ENCODE measurements at regions of chr3 and their contacts with region 1.

Region 1: DNA sequence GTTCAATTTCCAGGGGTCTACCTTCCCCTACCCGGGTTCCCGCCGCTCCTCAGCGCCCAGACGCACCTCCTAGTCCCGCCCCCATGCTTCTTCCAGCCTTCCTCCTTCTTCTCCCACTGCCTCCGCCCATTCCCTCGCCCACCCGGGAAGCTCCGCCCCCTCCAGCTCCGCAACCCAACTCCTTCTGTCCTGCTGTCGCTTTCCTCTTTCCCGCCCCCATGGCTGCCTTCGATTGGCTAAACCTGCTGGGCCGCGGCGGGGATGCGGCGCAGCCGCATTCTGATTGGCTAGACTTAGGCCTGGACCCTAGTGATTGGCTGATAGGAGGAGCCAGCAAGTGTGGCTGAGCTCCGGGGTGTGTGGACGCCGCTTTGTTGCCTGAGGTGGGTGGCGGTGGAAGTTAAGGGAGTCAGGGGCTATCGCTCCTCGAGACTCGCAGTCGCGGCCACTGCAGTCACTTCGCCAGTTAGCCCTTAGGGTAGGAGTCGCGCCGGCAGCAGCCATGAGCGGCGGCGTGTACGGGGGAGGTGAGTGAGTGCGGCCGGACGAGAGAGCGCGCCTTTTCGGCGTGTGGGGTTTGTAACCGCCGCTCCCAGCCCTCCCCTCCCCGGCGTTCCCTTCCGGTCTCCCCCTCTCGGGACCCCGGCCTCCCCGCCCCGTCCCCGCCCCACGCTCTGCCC is at the start of gene ACTL6A:
- DNase-seq: peak; percentile 100
- H3K4me3 ChIP-seq: peak within 1 kb of the TSS; percentile 84
- H3K27ac ChIP-seq: peak within 1 kb of the TSS; percentile 38
- H3K4me1 ChIP-seq: peaks cover 24% of the 10 kb centered on the region
- H3K27me3 ChIP-seq: no peaks in the 10 kb centered on the region
- CTCF ChIP-seq: no peak
- total RNA-seq, gene ACTL6A: 87.9 and 113 TPM in 2 replicates

Region 2: DNA sequence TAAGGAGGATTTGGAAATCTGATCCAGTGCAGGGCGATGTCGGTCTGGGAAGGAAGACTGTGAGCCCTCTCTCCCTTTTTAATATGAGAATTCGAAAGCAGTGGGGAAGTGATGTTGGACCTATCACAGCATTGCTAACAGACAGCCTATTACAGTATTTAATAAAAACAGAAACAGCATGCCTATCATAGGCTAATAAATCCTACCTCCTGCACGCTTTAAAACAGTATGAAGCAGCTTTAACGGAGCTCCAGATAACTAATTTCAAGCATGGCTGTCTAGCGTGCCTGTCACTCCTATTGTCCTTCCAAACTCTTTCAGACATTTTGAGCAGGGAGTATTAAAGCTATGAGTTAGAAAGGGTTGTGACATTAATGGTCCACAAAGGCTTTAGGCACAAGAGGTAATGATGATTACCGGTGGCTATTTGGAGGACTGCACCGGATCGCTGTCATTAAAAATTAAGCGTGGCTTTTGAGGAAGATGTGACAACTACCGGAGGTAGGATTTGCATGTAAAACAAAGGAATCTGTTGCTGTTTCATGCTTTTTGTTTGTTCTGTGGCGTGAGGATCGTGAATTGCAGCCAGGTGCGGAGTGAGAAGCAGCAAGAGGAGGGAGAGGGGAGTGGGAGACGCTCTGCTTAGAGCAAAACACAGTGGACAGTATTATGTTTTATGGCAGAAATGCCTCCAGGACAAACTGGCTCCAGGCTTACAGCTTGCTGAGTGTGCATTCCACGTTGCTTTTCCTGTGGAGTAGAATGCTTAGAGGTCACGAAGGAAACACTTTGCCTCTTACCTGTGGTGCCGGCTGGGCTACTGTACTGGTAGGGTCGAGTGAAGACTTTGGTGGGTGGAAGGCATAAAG is 1026.3 kb before region 1 on chr3 and contains the start of gene KCNMB2:
- CTCF ChIA-PET with region 1: no interaction called
- POLR2A ChIA-PET with region 1: no interaction called
- intact Hi-C with region 1: no loop called
- DNase-seq: no peak
- H3K4me3 ChIP-seq: no peak within 1 kb of the TSS
- H3K27ac ChIP-seq: no peak within 1 kb of the TSS
- H3K4me1 ChIP-seq: no peaks in the 10 kb centered on the region
- H3K27me3 ChIP-seq: no peaks in the 10 kb centered on the region
- CTCF ChIP-seq: no peak
- total RNA-seq, gene KCNMB2: not detected in 2 replicates

Region 3: DNA sequence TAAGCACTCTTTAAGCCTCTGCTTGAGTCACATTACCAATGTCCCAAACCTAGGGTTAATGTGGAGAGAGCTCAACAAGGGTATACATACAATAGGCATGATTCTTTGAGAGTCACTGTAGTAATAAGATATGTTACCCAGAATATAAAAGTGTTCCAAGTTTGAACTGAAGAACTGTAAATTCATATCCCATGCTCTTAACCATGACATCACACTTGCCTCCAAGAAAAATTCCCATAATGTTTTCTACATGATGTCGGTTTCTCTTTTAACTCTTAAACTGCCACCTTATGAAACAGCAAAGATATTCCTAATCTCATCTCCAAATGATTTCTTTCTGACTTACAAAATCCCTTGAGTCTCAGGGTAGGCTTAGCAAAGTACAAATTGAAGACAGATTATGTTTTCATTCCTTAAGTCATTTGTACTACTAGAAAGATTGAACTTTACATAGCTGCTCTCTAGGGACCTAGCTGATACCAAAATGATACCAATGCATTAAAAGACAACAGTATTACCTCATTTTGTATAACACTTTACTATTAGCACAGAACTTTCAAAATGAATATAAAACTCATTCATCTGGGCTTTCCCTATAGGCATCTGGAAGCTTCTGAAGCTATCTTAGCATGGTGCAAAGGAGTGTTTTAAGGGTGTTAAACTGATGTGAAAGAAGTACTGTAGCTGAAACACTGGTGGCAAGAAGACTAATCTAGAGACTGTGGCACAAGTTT is 899.4 kb before region 1 on chr3:
- CTCF ChIA-PET with region 1: no interaction called
- POLR2A ChIA-PET with region 1: no interaction called
- intact Hi-C with region 1: no loop called
- DNase-seq: no peak
- H3K4me3 ChIP-seq: no peak overlapping the region
- H3K27ac ChIP-seq: no peak overlapping the region
- H3K4me1 ChIP-seq: no peaks in the 10 kb centered on the region
- H3K27me3 ChIP-seq: no peaks in the 10 kb centered on the region
- CTCF ChIP-seq: no peak

Region 4: DNA sequence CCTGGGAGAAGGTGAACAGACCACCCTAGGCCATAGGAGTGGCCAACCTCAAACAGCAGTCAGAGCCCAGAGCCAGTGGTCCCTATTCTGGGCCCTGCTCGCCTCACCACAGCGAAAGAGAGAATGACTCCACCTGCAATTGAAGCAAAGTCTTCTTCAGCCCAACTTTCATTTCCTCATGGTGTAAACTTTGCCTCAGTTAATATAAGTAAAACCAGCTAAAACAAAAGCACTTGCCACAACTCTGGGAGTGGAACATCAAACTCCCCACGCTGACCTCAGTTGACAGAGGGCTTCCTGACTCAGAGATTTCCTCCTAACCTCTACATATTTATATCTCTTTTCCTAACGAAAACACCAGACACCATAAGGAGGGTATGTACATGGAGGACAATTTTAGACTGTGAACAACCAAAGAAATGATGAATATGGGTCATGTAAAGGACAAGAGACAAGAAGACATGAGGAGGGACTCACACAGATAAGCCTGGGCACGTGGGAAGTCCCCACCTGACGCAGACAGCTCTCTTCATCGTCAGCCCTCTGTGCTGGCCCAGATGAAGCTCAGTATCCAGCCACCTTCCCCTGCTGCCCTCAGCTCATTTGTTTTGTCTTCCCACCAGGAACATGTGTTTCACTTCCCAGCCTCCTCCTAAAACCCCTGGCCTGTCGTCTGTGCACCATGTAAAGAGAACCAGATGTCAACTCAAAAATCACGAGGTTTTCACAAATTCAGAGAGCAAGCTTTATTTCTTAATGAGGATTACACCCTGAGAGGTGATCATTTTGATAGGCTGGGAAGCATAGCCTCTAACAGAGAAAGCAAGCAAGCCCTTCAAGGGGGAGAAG is 885.6 kb before region 1 on chr3:
- CTCF ChIA-PET with region 1: interaction called, 14 read pairs
- POLR2A ChIA-PET with region 1: no interaction called
- intact Hi-C with region 1: no loop called
- DNase-seq: no peak
- H3K4me3 ChIP-seq: no peak overlapping the region
- H3K27ac ChIP-seq: no peak overlapping the region
- H3K4me1 ChIP-seq: no peaks in the 10 kb centered on the region
- H3K27me3 ChIP-seq: no peaks in the 10 kb centered on the region
- CTCF ChIP-seq: no peak

Region 5: GRCh38 chr3:179147873-179148615 is 414.7 kb before region 1 on chr3 and contains the start of gene PIK3CA:
- CTCF ChIA-PET with region 1: no interaction called
- POLR2A ChIA-PET with region 1: interaction called, 22 read pairs
- intact Hi-C with region 1: loop called (anchors 1 kb)
- DNase-seq: peak; percentile 95 to 98
- H3K4me3 ChIP-seq: peak within 1 kb of the TSS; percentile 85
- H3K27ac ChIP-seq: peak within 1 kb of the TSS; percentile 68
- H3K4me1 ChIP-seq: peaks cover 20% of the 10 kb centered on the region
- H3K27me3 ChIP-seq: no peaks in the 10 kb centered on the region
- CTCF ChIP-seq: no peak
- total RNA-seq, gene PIK3CA: 33.9 and 39.9 TPM in 2 replicates

Region 6: GRCh38 chr3:179347345-179348194 is 215.2 kb before region 1 on chr3 and contains the start of gene MFN1:
- CTCF ChIA-PET with region 1: no interaction called
- POLR2A ChIA-PET with region 1: interaction called, 5 read pairs
- intact Hi-C with region 1: loop called (anchors 1 kb)
- DNase-seq: peak; percentile 95
- H3K4me3 ChIP-seq: peak within 1 kb of the TSS; percentile 77
- H3K27ac ChIP-seq: peak within 1 kb of the TSS; percentile 62
- H3K4me1 ChIP-seq: peaks cover 17% of the 10 kb centered on the region
- H3K27me3 ChIP-seq: no peaks in the 10 kb centered on the region
- CTCF ChIP-seq: no peak
- total RNA-seq, gene MFN1: 69.1 and 69.6 TPM in 2 replicates

Region 7: DNA sequence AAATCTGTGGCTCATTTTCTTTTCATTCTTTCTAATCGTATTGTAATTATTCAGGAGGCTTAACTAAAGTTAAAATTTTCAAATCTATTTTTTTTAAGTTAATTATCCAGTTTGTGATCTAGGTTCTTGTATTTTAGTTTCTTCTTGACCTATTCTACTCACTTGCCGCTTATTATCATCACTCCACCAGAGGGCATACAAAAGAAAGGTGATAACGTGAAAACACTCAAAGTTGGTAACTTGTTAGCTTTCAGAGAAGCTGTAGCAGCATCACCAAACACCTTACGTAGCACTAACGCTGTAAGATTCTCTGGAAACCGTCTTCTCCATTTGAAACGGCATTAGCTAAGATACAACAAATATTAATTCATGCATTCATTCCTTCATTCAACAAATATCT is 116.2 kb before region 1 on chr3:
- CTCF ChIA-PET with region 1: no interaction called
- POLR2A ChIA-PET with region 1: interaction called, 11 read pairs
- intact Hi-C with region 1: loop called (anchors 1 kb)
- DNase-seq: no peak
- H3K4me3 ChIP-seq: no peak overlapping the region
- H3K27ac ChIP-seq: no peak overlapping the region
- H3K4me1 ChIP-seq: peaks cover 5% of the 10 kb centered on the region; the same call in 1 of the 2 replicates
- H3K27me3 ChIP-seq: 0 out of 2 replicates have a peak, but pooled peaks cover 3% of the 10 kb centered on the region
- CTCF ChIP-seq: peak; percentile 60

Region 8: GRCh38 chr3:179604321-179605078 is 41.8 kb after region 1 on chr3 and contains the starts of genes MRPL47 and NDUFB5:
- CTCF ChIA-PET with region 1: interaction called, 3 read pairs
- POLR2A ChIA-PET with region 1: interaction called, 27 read pairs
- intact Hi-C with region 1: loop called (anchors 1 kb)
- DNase-seq: peak; percentile 90 to 95
- H3K4me3 ChIP-seq: peak within 1 kb of the TSS; percentile 94
- H3K27ac ChIP-seq: peak within 1 kb of the TSS; percentile 76
- H3K4me1 ChIP-seq: peaks cover 24% of the 10 kb centered on the region
- H3K27me3 ChIP-seq: no peaks in the 10 kb centered on the region
- CTCF ChIP-seq: no peak
- total RNA-seq, gene MRPL47: 51.3 and 56.1 TPM in 2 replicates
- total RNA-seq, gene NDUFB5: 121 and 128 TPM in 2 replicates

Measured in PC-9 (cell line).